A673 (cell line): ENCODE measurements at regions of chr17 and their contacts with region 1.

Region 1: GRCh38 chr17:48596000-48596734 is 2.6 kb upstream of the HOXB5 start:
- DNase-seq: no peak
- H3K4me3 ChIP-seq: no peak overlapping the region
- H3K27ac ChIP-seq: no peak overlapping the region
- H3K4me1 ChIP-seq: peaks cover 36% of the 10 kb centered on the region
- H3K27me3 ChIP-seq: no peaks in the 10 kb centered on the region
- CTCF ChIP-seq: no peak

Region 2: GRCh38 chr17:48259694-48260291 is 336.4 kb before region 1 on chr17:
- CTCF ChIA-PET with region 1: no interaction called
- POLR2A ChIA-PET with region 1: interaction called, 14 read pairs
- intact Hi-C with region 1: no loop called
- DNase-seq: peak; percentile 64
- H3K4me3 ChIP-seq: no peak overlapping the region
- H3K27ac ChIP-seq: no peak overlapping the region
- H3K4me1 ChIP-seq: peaks cover 39% of the 10 kb centered on the region
- H3K27me3 ChIP-seq: no peaks in the 10 kb centered on the region
- CTCF ChIP-seq: peak; percentile 69

Region 3: DNA sequence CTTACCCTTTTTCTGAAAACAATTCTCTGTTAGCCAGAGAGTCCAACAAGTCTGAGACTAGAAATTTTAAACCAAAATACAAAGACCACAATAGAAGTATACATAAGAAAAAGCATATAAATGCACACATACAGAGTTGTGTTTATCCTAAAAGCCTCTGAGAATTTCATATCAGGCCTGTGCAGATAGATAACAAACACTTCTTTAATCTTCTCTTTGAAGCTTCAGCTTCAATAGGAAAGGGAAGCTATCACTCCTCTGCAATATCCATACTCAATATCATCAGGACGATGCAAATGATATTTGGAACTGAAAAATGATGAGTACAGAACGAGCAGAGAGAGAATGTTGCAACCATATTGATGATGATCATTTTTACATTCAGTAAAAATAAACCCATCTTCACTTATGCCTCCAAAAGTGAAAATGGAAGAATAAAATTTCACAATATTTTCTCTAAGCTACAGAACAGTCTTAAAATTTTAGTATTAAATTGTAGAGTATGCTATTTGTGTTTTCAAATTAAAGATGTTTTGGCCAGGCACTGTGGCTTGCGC is 227.7 kb before region 1 on chr17:
- CTCF ChIA-PET with region 1: interaction called, 13 read pairs
- POLR2A ChIA-PET with region 1: no interaction called
- intact Hi-C with region 1: no loop called
- DNase-seq: no peak
- H3K4me3 ChIP-seq: no peak overlapping the region
- H3K27ac ChIP-seq: no peak overlapping the region
- H3K4me1 ChIP-seq: peaks cover 2% of the 10 kb centered on the region
- H3K27me3 ChIP-seq: peaks cover 9% of the 10 kb centered on the region
- CTCF ChIP-seq: no peak